ENCODE measurements at regions of chr20 and their contacts with region 1.

Region 1: GRCh38 chr20:12925214-12925755 is 83.5 kb upstream of the SPTLC3 start:
- H3K4me3 ChIP-seq: no peak overlapping the region
- H3K27ac ChIP-seq: no peak overlapping the region
- H3K4me1 ChIP-seq: peaks cover 8% of the 10 kb centered on the region
- CTCF ChIP-seq: peak; percentile 76

Region 2: DNA sequence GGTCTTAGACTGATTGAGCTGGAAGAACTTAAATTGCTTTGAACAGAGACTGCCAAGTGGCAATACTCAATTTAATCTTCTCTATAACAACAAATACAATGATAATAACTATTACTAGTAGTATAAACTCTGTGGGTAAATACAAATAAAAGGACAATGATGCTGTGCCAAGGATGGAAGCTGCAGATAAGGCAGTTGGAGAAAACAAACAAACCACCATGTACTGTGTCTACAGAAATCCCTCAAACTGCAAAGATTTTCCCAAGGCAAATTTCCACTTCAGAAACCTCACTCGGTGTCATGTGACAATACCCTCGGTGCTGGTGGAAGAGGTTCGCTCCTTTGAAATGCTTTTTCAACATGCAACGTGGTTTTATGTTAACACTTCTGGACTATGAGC is 14.6 kb before region 1 on chr20:
- CTCF ChIA-PET with region 1: no interaction called
- POLR2A ChIA-PET with region 1: no interaction called
- H3K4me3 ChIP-seq: no peak overlapping the region
- H3K27ac ChIP-seq: no peak overlapping the region
- H3K4me1 ChIP-seq: no peaks in the 10 kb centered on the region
- CTCF ChIP-seq: no peak

Region 3: GRCh38 chr20:12936036-12936435 is 10.8 kb after region 1 on chr20:
- CTCF ChIA-PET with region 1: interaction called, 10 read pairs
- POLR2A ChIA-PET with region 1: no interaction called
- H3K4me3 ChIP-seq: no peak overlapping the region
- H3K27ac ChIP-seq: no peak overlapping the region
- H3K4me1 ChIP-seq: no peaks in the 10 kb centered on the region
- CTCF ChIP-seq: no peak

Region 4: DNA sequence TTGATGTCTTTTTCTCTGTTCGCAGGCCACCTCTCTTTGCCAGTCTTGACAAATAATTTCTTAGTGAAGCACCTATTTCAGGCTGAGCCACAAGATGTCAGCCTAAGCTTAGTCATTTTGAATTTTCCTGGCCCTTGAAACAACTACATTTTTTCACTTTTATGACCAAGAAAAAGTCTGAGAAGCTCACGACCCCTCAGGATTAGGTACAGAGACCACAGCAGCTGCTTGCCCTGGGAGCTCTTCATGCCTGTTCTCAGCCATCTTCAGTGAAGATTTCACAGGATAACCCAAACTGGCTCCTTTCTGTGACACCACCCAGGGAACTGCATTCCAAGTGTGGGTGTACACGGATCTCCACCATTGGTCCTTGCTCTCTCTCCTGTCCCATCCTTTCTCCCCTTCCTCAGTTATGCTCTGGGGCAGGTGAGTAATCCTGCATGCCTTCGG is 45.1 kb after region 1 on chr20:
- CTCF ChIA-PET with region 1: interaction called, 62 read pairs
- POLR2A ChIA-PET with region 1: no interaction called
- H3K4me3 ChIP-seq: no peak overlapping the region
- H3K27ac ChIP-seq: no peak overlapping the region
- H3K4me1 ChIP-seq: no peaks in the 10 kb centered on the region
- CTCF ChIP-seq: 0 out of 2 replicates have a peak, but pooled peaks have one; percentile 14

Region 5: GRCh38 chr20:13105864-13106457 is 180.7 kb after region 1 on chr20:
- CTCF ChIA-PET with region 1: interaction called, 16 read pairs
- POLR2A ChIA-PET with region 1: no interaction called
- H3K4me3 ChIP-seq: no peak overlapping the region
- H3K27ac ChIP-seq: no peak overlapping the region
- H3K4me1 ChIP-seq: no peaks in the 10 kb centered on the region
- CTCF ChIP-seq: no peak

Measured in HEK293 (cell line).